Activated CD4-positive, alpha-beta memory T cell treated with anti-CD3 and anti-CD28 coated beads for 36 hours (primary cell): ENCODE measurements at regions of chr7 and their contacts with region 1.

Region 1: GRCh38 chr7:150502519-150502918 is 12.2 kb upstream of the GIMAP7 start:
- DNase-seq: peak; percentile 62
- H3K4me3 Mint-ChIP-seq: peak overlapping the region; percentile 36
- H3K27ac Mint-ChIP-seq: peak overlapping the region; percentile 98
- H3K4me1 Mint-ChIP-seq: peaks cover 82% of the 10 kb centered on the region
- H3K27me3 Mint-ChIP-seq: no peaks in the 10 kb centered on the region

Region 2: GRCh38 chr7:150487625-150488024 is 14.9 kb before region 1 on chr7:
- CTCF ChIA-PET with region 1: no interaction called
- POLR2A ChIA-PET with region 1: interaction called, 3 read pairs
- intact Hi-C with region 1: loop called (anchors 1 kb)
- DNase-seq: no peak
- H3K4me3 Mint-ChIP-seq: no peak overlapping the region
- H3K27ac Mint-ChIP-seq: no peak overlapping the region
- H3K4me1 Mint-ChIP-seq: peaks cover 70% of the 10 kb centered on the region
- H3K27me3 Mint-ChIP-seq: no peaks in the 10 kb centered on the region